MCF 10A (cell line): ENCODE measurements at regions of chr1 and their contacts with region 1.

Region 1: GRCh38 chr1:44036409-44037139 is 5.3 kb upstream of the SLC6A9 start:
- DNase-seq: peak; percentile 85
- H3K4me3 Mint-ChIP-seq: no peak overlapping the region
- H3K27ac Mint-ChIP-seq: no peak overlapping the region
- H3K4me1 Mint-ChIP-seq: peaks cover 11% of the 10 kb centered on the region
- H3K27me3 Mint-ChIP-seq: no peaks in the 10 kb centered on the region
- CTCF ChIP-seq: peak; percentile 73

Region 2: GRCh38 chr1:43881415-43881814 is 155.2 kb before region 1 on chr1:
- CTCF ChIA-PET with region 1: no interaction called
- POLR2A ChIA-PET with region 1: no interaction called
- intact Hi-C with region 1: no loop called
- DNase-seq: no peak
- H3K4me3 Mint-ChIP-seq: no peak overlapping the region
- H3K27ac Mint-ChIP-seq: no peak overlapping the region
- H3K4me1 Mint-ChIP-seq: no peaks in the 10 kb centered on the region
- H3K27me3 Mint-ChIP-seq: no peaks in the 10 kb centered on the region
- CTCF ChIP-seq: no peak

Region 3: DNA sequence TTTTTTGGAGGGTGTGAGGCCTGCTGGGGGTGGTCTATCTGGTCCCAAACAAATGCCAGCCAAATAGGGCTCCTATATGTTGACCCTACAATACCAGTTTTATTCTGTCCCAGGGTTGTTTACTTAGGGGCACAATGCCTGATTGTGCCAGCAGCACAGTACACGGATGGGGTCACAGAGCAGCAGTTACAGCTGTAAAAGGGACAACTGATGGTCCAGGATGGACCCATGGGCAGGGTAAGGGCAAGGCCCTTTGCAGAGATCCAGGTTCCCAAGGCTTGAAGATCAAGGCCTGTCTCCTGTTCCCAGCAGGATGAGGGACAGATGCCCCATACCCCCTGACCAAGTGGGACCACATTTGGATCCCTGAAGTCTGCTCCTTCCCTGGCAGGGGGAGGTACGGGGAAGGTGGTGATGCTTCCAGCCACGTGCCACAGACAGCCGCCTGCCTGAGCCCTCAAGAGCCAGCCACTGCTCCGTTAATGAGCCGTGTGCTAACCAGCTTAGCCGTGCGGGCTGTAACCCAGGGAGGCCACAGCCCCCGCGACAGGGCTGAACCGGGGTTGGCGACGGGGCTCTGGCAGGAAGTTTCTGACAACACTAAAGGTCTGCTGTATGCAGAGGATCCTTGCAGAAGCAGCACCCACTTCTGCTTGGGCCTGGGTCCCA is 23.5 kb before region 1 on chr1:
- CTCF ChIA-PET with region 1: interaction called, 22 read pairs
- POLR2A ChIA-PET with region 1: interaction called, 3 read pairs
- intact Hi-C with region 1: no loop called
- DNase-seq: no peak
- H3K4me3 Mint-ChIP-seq: no peak overlapping the region
- H3K27ac Mint-ChIP-seq: no peak overlapping the region
- H3K4me1 Mint-ChIP-seq: no peaks in the 10 kb centered on the region
- H3K27me3 Mint-ChIP-seq: no peaks in the 10 kb centered on the region
- CTCF ChIP-seq: no peak

Region 4: DNA sequence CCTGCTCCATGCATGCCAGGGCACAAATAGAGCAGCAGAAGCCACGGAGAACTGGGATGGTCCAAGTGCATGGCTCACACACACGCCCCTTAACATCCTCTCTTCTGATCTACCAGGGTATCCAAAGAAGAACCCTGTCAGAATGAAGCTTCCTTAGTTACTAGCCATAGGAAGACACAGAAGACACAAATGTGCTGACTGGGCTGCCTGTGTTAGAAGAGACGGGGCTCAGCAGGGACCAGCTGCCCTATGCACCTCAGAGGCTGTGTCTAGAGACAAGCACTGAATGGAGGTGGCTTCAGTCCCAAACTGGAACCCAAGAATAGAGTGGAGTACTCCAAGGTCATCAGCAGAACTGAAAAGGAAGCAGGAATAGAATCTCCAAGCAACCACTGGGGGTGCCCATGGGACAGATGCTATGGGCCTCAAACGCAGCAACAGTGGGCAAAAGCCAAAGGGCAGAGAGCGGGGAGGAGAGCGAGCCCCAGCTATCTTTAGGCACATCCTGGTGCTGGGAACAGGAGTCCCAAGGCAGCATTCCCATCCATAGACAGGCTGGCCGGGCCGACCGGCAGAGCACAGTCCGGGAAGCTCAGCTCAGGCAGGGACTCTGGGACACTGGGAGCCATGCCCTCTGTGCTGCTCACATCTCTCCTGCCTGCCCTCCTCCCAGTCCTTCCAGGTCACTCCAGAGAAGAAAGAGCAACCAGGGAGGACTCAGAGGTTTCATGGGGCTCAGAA is 14.8 kb before region 1 on chr1:
- CTCF ChIA-PET with region 1: interaction called, 13 read pairs
- POLR2A ChIA-PET with region 1: interaction called, 3 read pairs
- intact Hi-C with region 1: no loop called
- DNase-seq: no peak
- H3K4me3 Mint-ChIP-seq: no peak overlapping the region
- H3K27ac Mint-ChIP-seq: no peak overlapping the region
- H3K4me1 Mint-ChIP-seq: peaks cover 7% of the 10 kb centered on the region
- H3K27me3 Mint-ChIP-seq: no peaks in the 10 kb centered on the region
- CTCF ChIP-seq: no peak

Region 5: DNA sequence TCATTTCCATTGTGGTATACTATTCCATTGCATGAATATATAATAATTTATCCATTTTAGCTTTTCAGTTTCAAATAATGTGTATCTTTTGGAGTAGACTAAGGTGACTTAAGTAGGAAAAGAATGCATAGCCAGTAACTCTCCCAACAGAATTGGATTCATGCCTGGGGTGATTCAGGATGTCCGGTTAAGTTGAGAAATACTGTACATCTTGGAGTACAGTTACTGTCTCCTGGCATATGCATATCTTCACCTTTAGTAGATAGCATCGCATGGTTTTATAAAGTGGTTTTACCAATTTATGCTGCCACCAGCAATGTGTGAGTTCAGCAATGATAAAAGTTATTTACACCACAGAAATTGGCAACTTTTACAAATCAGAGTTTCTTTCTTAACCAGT is 13.3 kb after region 1 on chr1:
- CTCF ChIA-PET with region 1: interaction called, 65 read pairs
- POLR2A ChIA-PET with region 1: interaction called, 5 read pairs
- intact Hi-C with region 1: no loop called
- DNase-seq: peak; percentile 92
- H3K4me3 Mint-ChIP-seq: no peak overlapping the region
- H3K27ac Mint-ChIP-seq: no peak overlapping the region
- H3K4me1 Mint-ChIP-seq: peaks cover 33% of the 10 kb centered on the region
- H3K27me3 Mint-ChIP-seq: no peaks in the 10 kb centered on the region
- CTCF ChIP-seq: no peak

Region 6: DNA sequence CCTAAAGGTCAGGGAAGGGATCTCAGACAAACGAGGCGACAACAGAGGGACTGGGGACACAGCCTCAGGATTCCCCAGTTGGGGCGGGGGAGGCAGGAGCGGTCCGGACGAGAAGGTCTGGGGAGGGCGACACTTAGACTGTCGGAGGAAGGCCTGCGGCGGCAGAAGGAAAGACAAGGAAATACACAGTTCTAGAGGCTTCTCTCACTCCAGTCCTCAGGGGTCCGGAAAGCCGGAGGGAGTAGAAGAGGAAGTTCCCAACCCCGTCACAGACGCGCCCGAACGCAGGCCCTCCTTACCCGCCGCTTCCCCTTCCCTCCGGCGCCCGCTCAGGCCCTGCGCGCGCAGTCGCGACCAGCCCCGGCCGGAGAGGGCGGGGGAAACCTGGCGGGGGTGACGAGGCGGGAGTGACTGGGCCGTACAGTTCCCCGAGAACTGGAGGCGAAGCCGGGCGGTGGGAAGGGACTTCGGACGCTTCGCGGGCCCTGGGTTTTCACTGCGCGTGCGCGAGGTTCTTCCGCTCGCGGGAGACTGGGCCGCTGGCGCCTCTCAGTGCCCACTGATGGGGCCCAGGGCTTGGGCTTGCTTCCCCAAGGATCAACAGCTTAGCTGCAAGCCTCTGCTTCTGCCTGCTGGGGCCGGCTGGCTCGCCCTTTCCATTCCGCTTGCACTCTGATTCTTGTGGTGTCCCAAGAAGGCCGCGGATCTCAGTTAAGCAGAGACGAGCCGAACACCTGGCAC is 1713.9 kb after region 1 on chr1 and contains the start of gene IPP:
- CTCF ChIA-PET with region 1: no interaction called
- POLR2A ChIA-PET with region 1: no interaction called
- intact Hi-C with region 1: no loop called
- DNase-seq: peak; percentile 97
- H3K4me3 Mint-ChIP-seq: peak within 1 kb of the TSS; percentile 97
- H3K27ac Mint-ChIP-seq: peak within 1 kb of the TSS; percentile 100
- H3K4me1 Mint-ChIP-seq: peaks cover 4% of the 10 kb centered on the region
- H3K27me3 Mint-ChIP-seq: no peaks in the 10 kb centered on the region
- CTCF ChIP-seq: no peak
- total RNA-seq, gene IPP: 11.6 and 17.6 TPM in 2 replicates